Breast epithelium (tissue), 4 donors: ENCODE measurements at regions of chr20 and their contacts with region 1.

Region 1: GRCh38 chr20:38915355-38915754 is 10.9 kb upstream of the FAM83D start:
- DNase-seq: no peak
- H3K4me3 ChIP-seq: no peak overlapping the region
- H3K27ac ChIP-seq: no peak overlapping the region
- H3K4me1 ChIP-seq: no peaks in the 10 kb centered on the region
- H3K27me3 ChIP-seq: peaks cover 0 to 3% of the 10 kb centered on the region in 2 donors
- CTCF ChIP-seq: no peak
- POLR2A ChIP-seq: no peak

Region 2: DNA sequence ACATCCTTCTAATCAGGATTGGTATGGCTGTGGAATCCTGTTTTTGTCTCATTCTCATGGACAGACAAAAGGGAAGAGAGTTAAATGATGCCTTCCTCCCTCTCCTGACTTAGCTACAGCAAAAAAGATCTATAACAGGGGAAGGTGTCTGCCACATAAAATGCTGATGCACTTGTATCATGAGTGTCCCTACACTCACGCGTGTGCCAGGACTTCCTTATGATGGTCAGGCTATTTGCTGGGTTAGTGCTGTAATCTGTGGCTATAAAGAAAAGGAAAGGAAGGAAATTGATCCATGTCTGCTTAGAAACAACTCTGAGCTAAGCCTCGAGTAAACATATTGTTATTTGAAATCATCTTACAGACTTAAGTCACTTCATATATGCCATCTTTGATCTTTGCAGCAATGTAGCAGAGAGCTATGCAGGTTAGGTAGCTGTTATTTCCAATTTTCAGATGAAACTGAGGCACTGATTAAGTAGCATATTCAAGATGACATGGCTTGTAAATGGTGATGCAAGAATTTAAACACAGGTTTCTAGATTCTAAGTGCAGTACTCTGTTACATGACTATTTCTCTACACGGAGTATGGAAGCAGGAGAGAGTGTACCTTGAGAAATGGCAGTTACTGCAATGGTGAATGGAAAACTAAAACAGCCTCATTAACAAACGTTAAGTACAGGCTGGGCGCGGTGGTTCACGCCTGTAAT is 38.4 kb after region 1 on chr20:
- intact Hi-C with region 1: loop called (anchors 2 kb)
- DNase-seq: no peak
- H3K4me3 ChIP-seq: no peak overlapping the region
- H3K27ac ChIP-seq: no peak overlapping the region
- H3K4me1 ChIP-seq: no peaks in the 10 kb centered on the region
- H3K27me3 ChIP-seq: no peaks in the 10 kb centered on the region
- CTCF ChIP-seq: no peak
- POLR2A ChIP-seq: no peak

Region 3: GRCh38 chr20:39164642-39165041 is 249.3 kb after region 1 on chr20:
- intact Hi-C with region 1: no loop called
- DNase-seq: no peak
- H3K4me3 ChIP-seq: no peak overlapping the region
- H3K27ac ChIP-seq: peak overlapping the region in 1 of 2 donors; percentile 12
- H3K4me1 ChIP-seq: no peaks in the 10 kb centered on the region
- H3K27me3 ChIP-seq: no peaks in the 10 kb centered on the region
- CTCF ChIP-seq: no peak
- POLR2A ChIP-seq: no peak